Activated B cell treated with CpG ODN at 0.5 μM for 24 hours (primary cell): ENCODE measurements at regions of chr1 and their contacts with region 1.

Region 1: GRCh38 chr1:27662707-27663393 is 9.1 kb downstream of the IFI6 start:
- DNase-seq: peak; percentile 88
- ATAC-seq: peak; percentile 53
- H3K4me3 Mint-ChIP-seq: peak overlapping the region; percentile 72
- H3K27ac Mint-ChIP-seq: peak overlapping the region; percentile 100
- H3K4me1 Mint-ChIP-seq: peaks cover 51% of the 10 kb centered on the region
- H3K27me3 Mint-ChIP-seq: no peaks in the 10 kb centered on the region
- CTCF ChIP-seq: no peak

Region 2: DNA sequence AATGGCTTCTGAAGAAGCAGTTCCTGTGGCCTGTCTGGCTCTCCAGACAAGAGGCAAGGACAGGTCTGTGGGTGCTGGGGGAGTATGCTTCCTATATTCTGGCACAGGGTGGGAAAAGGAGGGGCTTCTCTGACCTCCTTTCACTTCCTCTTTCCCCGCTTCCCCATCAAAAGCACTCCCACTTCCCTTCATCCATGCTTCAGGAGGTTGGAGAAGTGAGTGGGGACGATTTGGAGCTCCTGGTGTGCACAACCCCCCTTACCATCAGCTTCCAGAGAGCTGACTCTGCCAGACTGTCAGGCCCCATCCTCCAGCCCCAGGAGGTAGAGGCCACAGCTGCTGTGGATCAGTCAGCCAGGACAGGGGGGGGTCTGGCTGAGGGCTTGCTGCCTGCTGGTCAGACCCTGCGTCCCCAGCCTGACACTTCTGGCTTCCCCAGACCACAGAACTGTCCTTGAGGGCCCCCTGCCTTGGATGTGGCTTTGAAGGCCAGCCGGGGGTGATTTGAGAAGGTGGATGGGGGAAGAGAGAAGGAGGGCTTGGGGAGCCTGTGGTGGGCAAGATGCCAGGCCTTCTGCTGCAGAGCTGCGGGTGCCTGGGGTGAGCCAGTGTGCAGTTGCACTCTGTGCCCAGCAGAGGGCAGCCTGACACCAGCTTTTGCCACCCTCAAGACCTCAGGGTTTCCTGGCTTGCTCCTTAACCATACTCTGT is 362.4 kb before region 1 on chr1:
- CTCF ChIA-PET with region 1: interaction called, 24 read pairs
- POLR2A ChIA-PET with region 1: interaction called, 3 read pairs
- intact Hi-C with region 1: loop called (anchors 1 kb)
- DNase-seq: peak; percentile 72
- ATAC-seq: peak; percentile 90
- H3K4me3 Mint-ChIP-seq: no peak overlapping the region
- H3K27ac Mint-ChIP-seq: no peak overlapping the region
- H3K4me1 Mint-ChIP-seq: peaks cover 3% of the 10 kb centered on the region
- H3K27me3 Mint-ChIP-seq: no peaks in the 10 kb centered on the region
- CTCF ChIP-seq: peak; percentile 99

Region 3: DNA sequence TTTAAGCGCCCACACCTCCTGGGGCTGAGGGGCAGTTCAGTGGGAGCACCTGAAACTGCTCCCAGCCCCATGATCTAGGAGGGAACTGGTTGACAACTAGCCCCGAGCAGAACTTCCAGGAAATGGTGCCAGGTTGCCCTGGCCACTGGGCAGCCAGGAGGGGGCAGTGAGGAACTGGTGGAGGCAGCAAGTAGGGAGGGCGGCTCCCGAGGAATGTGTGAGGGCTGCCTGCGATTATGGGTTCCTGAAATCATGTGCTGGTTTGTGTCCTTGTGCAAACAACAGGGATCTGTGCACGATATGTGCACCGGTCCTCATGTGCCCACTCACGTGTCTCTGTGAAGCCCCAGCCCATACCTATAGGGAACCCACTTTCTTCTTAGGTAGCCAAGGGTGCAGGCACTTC is 260.5 kb before region 1 on chr1:
- CTCF ChIA-PET with region 1: interaction called, 10 read pairs
- POLR2A ChIA-PET with region 1: interaction called, 11 read pairs
- intact Hi-C with region 1: loop called (anchors 1 kb)
- DNase-seq: no peak
- ATAC-seq: no peak
- H3K4me3 Mint-ChIP-seq: peak overlapping the region; percentile 72
- H3K27ac Mint-ChIP-seq: peak overlapping the region; percentile 91
- H3K4me1 Mint-ChIP-seq: peaks cover 53% of the 10 kb centered on the region
- H3K27me3 Mint-ChIP-seq: no peaks in the 10 kb centered on the region
- CTCF ChIP-seq: no peak

Region 4: GRCh38 chr1:27556781-27557595 is 105.9 kb before region 1 on chr1:
- CTCF ChIA-PET with region 1: interaction called, 19 read pairs
- POLR2A ChIA-PET with region 1: interaction called, 10 read pairs
- intact Hi-C with region 1: loop called (anchors 1 kb)
- DNase-seq: peak; percentile 62
- ATAC-seq: peak; percentile 84
- H3K4me3 Mint-ChIP-seq: peak overlapping the region; percentile 36
- H3K27ac Mint-ChIP-seq: peak overlapping the region; percentile 26
- H3K4me1 Mint-ChIP-seq: peaks cover 38% of the 10 kb centered on the region
- H3K27me3 Mint-ChIP-seq: no peaks in the 10 kb centered on the region
- CTCF ChIP-seq: peak; percentile 26

Region 5: GRCh38 chr1:27624467-27625178 is 38.2 kb before region 1 on chr1:
- CTCF ChIA-PET with region 1: interaction called, 19 read pairs
- POLR2A ChIA-PET with region 1: interaction called, 271 read pairs
- intact Hi-C with region 1: no loop called
- DNase-seq: no peak
- ATAC-seq: no peak
- H3K4me3 Mint-ChIP-seq: no peak overlapping the region
- H3K27ac Mint-ChIP-seq: no peak overlapping the region
- H3K4me1 Mint-ChIP-seq: peaks cover 35% of the 10 kb centered on the region
- H3K27me3 Mint-ChIP-seq: no peaks in the 10 kb centered on the region
- CTCF ChIP-seq: no peak

Region 6: DNA sequence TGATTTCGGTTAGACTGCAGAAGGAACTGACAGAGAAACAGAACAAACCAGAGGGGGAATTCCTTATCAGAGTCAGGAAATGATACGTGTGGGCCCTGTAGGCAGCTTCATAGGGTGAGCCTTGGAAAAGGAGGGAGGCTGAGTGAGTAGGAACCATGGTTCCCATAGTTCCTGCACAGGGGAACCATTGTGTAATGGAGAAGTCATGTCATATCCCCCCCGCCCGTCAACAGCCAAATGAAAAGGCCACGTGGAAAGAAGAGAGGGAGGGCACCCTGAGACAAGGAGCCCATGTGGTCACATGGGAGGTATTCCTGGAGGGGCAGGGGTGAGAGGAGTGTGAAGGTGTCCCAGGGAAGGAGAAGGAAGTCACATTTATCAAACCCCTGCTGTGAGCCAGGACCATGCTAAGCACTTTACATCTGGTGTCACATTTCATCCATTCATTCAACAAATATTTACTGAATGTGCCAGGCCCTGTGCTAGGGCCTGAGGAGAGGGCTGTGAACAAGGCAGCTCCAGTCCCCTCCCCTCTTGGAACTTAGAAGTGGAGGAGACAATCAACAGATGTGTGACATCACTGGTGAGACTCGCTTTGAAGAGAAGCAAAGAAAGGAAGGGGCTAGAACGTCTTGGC is 12.2 kb before region 1 on chr1:
- CTCF ChIA-PET with region 1: interaction called, 16 read pairs
- POLR2A ChIA-PET with region 1: interaction called, 9 read pairs
- intact Hi-C with region 1: no loop called
- DNase-seq: no peak
- ATAC-seq: no peak
- H3K4me3 Mint-ChIP-seq: no peak overlapping the region
- H3K27ac Mint-ChIP-seq: no peak overlapping the region
- H3K4me1 Mint-ChIP-seq: peaks cover 7% of the 10 kb centered on the region
- H3K27me3 Mint-ChIP-seq: no peaks in the 10 kb centered on the region
- CTCF ChIP-seq: no peak